Mammary epithelial cell (primary cell): ENCODE measurements at regions of chr15 and their contacts with region 1.

Region 1: GRCh38 chr15:101413239-101413638 is 76.3 kb downstream of the PCSK6 start:
- DNase-seq: no peak
- H3K4me3 ChIP-seq: no peak overlapping the region
- H3K27ac ChIP-seq: no peak overlapping the region
- H3K4me1 ChIP-seq: no peaks in the 10 kb centered on the region
- H3K27me3 ChIP-seq: peaks cover 2% of the 10 kb centered on the region
- CTCF ChIP-seq: no peak

Region 2: GRCh38 chr15:101376615-101377395 is 36.4 kb before region 1 on chr15:
- CTCF ChIA-PET with region 1: no interaction called
- dilution Hi-C with region 1: loop called (anchors 5 kb)
- in situ Hi-C with region 1: no loop called
- intact Hi-C with region 1: no loop called
- DNase-seq: no peak
- H3K4me3 ChIP-seq: no peak overlapping the region
- H3K27ac ChIP-seq: no peak overlapping the region
- H3K4me1 ChIP-seq: no peaks in the 10 kb centered on the region
- H3K27me3 ChIP-seq: no peaks in the 10 kb centered on the region
- CTCF ChIP-seq: no peak

Region 3: GRCh38 chr15:101540480-101541239 is 127.4 kb after region 1 on chr15:
- CTCF ChIA-PET with region 1: no interaction called
- dilution Hi-C with region 1: no loop called
- in situ Hi-C with region 1: no loop called
- intact Hi-C with region 1: no loop called
- DNase-seq: no peak
- H3K4me3 ChIP-seq: no peak overlapping the region
- H3K27ac ChIP-seq: no peak overlapping the region
- H3K4me1 ChIP-seq: no peaks in the 10 kb centered on the region
- H3K27me3 ChIP-seq: peaks cover 3% of the 10 kb centered on the region
- CTCF ChIP-seq: no peak

Region 4: DNA sequence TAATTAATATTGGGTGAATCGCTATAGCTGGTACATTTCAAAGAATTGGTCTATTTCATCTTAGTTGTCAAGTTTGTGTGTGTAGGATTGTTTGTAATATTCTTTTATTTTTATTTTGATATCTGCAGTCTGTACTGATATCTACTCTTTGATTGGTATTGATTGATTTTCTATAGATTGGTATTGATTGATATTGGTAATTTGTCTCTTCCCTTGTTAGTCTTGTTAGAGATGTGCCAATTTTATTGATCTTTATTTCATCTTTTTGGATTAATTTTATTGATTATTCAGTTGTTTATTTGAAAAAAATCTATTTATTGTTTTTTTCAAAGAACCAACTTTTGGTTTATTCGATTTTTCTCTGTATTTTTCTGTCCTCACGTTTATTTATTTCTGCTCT is 177.5 kb after region 1 on chr15:
- CTCF ChIA-PET with region 1: no interaction called
- dilution Hi-C with region 1: no loop called
- in situ Hi-C with region 1: no loop called
- intact Hi-C with region 1: no loop called
- DNase-seq: no peak
- H3K4me3 ChIP-seq: no peak overlapping the region
- H3K27ac ChIP-seq: no peak overlapping the region
- H3K4me1 ChIP-seq: no peaks in the 10 kb centered on the region
- H3K27me3 ChIP-seq: no peaks in the 10 kb centered on the region
- CTCF ChIP-seq: no peak

Region 5: GRCh38 chr15:101689901-101690300 is 276.7 kb after region 1 on chr15:
- CTCF ChIA-PET with region 1: no interaction called
- dilution Hi-C with region 1: no loop called
- in situ Hi-C with region 1: no loop called
- intact Hi-C with region 1: no loop called
- DNase-seq: peak; percentile 78
- H3K4me3 ChIP-seq: no peak overlapping the region
- H3K27ac ChIP-seq: no peak overlapping the region
- H3K4me1 ChIP-seq: peaks cover 20% of the 10 kb centered on the region
- H3K27me3 ChIP-seq: no peaks in the 10 kb centered on the region
- CTCF ChIP-seq: no peak